ENCODE measurements at regions of chr9 and their contacts with region 1.

Region 1: DNA sequence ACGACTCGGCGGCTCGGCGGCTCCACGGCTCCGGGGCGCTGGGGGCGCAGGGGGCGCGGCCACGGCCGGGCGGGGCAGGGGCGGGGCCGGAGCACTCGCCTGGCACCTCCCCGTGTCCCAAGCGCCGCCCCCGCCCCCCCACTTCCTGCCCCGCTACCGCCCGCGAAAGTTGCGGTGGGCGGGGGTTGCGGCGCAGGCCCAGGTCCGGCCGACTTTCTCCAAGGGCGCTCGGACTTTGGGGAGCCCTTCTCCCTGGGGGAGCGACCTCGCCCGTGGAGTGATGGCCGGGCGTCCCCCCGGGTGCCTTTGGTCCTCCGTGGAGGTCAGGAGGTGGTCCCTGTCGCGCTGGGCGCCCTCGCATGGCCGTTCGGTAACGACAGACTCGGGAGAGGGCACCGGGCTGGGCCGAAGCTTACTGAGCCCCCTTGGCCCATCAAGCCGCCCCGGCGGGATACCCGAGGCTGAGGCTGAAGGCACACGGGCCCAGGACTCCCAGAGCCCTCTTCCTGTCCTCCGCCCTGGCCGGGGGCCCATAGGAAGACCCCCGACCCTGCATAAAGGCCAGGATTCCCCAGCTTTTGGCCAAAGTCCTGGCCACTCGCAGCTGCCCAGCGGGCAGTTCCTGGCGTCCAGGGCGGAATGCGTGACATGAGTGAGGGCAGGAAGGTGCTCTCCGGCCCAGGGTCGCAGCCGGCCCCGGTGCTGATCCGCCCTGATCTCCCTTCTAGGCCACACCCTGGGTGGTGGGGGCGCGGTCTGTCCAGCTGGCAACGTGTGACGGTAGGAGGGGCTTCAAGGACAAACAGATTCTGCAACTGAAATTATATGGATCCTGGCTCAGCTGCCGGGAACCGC is 883 bp upstream of the VAV2 start:
- DNase-seq: peak; percentile 80
- ATAC-seq: peak; percentile 76
- H3K4me3 Mint-ChIP-seq: peak overlapping the region; percentile 76
- H3K27ac Mint-ChIP-seq: peak overlapping the region; percentile 65
- H3K4me1 Mint-ChIP-seq: peaks cover 39% of the 10 kb centered on the region
- H3K27me3 Mint-ChIP-seq: no peaks in the 10 kb centered on the region
- CTCF ChIP-seq: no peak

Region 2: GRCh38 chr9:133589454-133590227 is 403.4 kb before region 1 on chr9:
- CTCF ChIA-PET with region 1: no interaction called
- POLR2A ChIA-PET with region 1: no interaction called
- intact Hi-C with region 1: loop called (anchors 2 kb)
- DNase-seq: no peak
- ATAC-seq: no peak
- H3K4me3 Mint-ChIP-seq: no peak overlapping the region
- H3K27ac Mint-ChIP-seq: no peak overlapping the region
- H3K4me1 Mint-ChIP-seq: peaks cover 16% of the 10 kb centered on the region
- H3K27me3 Mint-ChIP-seq: peaks cover 9% of the 10 kb centered on the region
- CTCF ChIP-seq: no peak

Region 3: GRCh38 chr9:133787754-133788025 is 205.3 kb before region 1 on chr9:
- CTCF ChIA-PET with region 1: interaction called, 220 read pairs
- POLR2A ChIA-PET with region 1: interaction called, 47 read pairs
- intact Hi-C with region 1: loop called (anchors 1 kb)
- DNase-seq: peak; percentile 39
- ATAC-seq: peak; percentile 80
- H3K4me3 Mint-ChIP-seq: no peak overlapping the region
- H3K27ac Mint-ChIP-seq: peak overlapping the region; percentile 68
- H3K4me1 Mint-ChIP-seq: peaks cover 90% of the 10 kb centered on the region
- H3K27me3 Mint-ChIP-seq: no peaks in the 10 kb centered on the region
- CTCF ChIP-seq: no peak

Region 4: GRCh38 chr9:133876144-133876543 is 116.9 kb before region 1 on chr9:
- CTCF ChIA-PET with region 1: no interaction called
- POLR2A ChIA-PET with region 1: no interaction called
- intact Hi-C with region 1: loop called (anchors 5 kb)
- DNase-seq: no peak
- ATAC-seq: no peak
- H3K4me3 Mint-ChIP-seq: no peak overlapping the region
- H3K27ac Mint-ChIP-seq: peak overlapping the region; percentile 37
- H3K4me1 Mint-ChIP-seq: peaks cover 51% of the 10 kb centered on the region
- H3K27me3 Mint-ChIP-seq: no peaks in the 10 kb centered on the region
- CTCF ChIP-seq: no peak

Region 5: DNA sequence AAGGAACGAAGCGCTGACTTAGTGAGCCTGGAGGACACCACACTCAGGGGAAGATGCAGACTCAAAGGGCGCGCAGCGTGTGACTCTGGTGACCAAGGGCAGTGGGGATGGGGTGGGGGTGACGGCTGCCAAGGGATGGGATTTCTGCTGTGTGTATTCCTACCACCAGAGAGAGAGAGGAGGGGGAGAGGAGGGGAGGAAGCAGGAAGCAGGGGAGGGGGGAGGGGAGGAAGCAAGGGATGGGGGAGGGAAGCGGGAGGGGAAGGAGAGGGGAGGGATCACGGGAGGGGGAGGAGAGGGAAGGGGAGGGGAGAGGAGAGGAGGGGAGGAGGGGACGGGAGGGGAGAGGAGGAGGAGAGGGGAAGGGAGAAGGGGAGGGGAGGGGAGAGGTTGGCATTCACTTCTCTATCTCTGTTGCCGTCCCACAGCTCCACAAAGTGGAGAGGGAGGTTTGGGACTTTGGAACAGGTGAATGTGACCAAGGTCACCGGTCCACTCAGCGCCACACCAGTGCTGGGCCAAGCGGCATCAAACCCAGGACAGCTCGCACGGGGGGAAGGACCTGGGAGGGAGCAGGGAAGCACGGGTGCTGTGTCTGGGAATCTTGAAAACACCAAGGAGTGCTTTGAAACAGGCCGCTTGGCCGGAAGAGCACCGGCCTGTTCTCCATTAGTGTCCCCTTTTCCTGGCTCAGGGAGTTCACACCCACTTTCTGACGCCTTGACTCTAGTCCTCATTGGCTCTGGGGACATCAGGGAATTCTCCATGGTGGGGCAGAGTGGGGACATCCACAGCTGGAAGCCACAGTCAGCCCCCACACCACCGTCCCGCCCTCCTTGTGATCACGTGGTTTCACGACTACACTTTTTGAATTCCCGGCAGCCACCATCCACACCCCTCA is 78.3 kb before region 1 on chr9:
- CTCF ChIA-PET with region 1: no interaction called
- POLR2A ChIA-PET with region 1: no interaction called
- intact Hi-C with region 1: no loop called
- DNase-seq: no peak
- ATAC-seq: no peak
- H3K4me3 Mint-ChIP-seq: no peak overlapping the region
- H3K27ac Mint-ChIP-seq: peak overlapping the region; percentile 30
- H3K4me1 Mint-ChIP-seq: peaks cover 72% of the 10 kb centered on the region
- H3K27me3 Mint-ChIP-seq: no peaks in the 10 kb centered on the region
- CTCF ChIP-seq: no peak

Region 6: GRCh38 chr9:133945314-133945975 is 47.6 kb before region 1 on chr9:
- CTCF ChIA-PET with region 1: interaction called, 13 read pairs
- POLR2A ChIA-PET with region 1: interaction called, 30 read pairs
- intact Hi-C with region 1: loop called (anchors 1 kb)
- DNase-seq: peak; percentile 72
- ATAC-seq: peak; percentile 71
- H3K4me3 Mint-ChIP-seq: peak overlapping the region; percentile 82
- H3K27ac Mint-ChIP-seq: peak overlapping the region; percentile 94
- H3K4me1 Mint-ChIP-seq: peaks cover 76% of the 10 kb centered on the region
- H3K27me3 Mint-ChIP-seq: no peaks in the 10 kb centered on the region
- CTCF ChIP-seq: no peak

Region 7: DNA sequence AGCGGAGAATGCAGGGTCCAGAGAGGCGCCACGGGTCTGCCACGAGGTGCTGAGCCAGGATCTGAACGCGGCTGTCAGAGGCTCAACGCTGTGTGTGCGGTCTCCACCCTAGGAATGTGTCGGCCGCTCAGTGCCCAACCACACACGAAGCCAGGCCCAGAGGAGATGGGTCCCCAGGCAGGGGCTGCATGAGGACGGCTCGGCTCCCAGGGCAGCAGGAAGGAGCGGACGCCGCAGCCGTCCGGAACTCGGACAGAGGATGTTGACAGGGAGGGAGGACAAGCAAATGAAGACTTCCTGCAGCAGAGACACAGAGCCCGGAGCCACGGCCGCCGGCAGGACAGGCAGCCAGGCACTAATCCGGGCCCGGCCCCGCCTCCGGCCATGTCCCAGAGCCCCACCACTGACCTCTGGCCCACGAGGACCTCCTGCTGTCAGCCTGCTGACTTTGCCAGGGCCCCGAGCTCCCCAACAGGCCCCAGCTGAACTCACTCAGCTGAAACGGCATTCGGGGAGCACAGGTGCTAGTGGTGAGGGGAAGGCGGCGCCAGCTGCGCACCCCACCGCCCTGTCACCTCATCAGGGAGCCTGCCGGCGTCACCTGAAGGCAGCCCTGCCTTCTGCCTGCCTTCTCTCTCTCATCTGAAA is 13.6 kb before region 1 on chr9:
- CTCF ChIA-PET with region 1: no interaction called
- POLR2A ChIA-PET with region 1: interaction called, 4 read pairs
- intact Hi-C with region 1: loop called (anchors 1 kb)
- DNase-seq: peak; percentile 44
- ATAC-seq: peak; percentile 75
- H3K4me3 Mint-ChIP-seq: peak overlapping the region; percentile 74
- H3K27ac Mint-ChIP-seq: peak overlapping the region; percentile 83
- H3K4me1 Mint-ChIP-seq: peaks cover 76% of the 10 kb centered on the region
- H3K27me3 Mint-ChIP-seq: no peaks in the 10 kb centered on the region
- CTCF ChIP-seq: no peak

Region 8: DNA sequence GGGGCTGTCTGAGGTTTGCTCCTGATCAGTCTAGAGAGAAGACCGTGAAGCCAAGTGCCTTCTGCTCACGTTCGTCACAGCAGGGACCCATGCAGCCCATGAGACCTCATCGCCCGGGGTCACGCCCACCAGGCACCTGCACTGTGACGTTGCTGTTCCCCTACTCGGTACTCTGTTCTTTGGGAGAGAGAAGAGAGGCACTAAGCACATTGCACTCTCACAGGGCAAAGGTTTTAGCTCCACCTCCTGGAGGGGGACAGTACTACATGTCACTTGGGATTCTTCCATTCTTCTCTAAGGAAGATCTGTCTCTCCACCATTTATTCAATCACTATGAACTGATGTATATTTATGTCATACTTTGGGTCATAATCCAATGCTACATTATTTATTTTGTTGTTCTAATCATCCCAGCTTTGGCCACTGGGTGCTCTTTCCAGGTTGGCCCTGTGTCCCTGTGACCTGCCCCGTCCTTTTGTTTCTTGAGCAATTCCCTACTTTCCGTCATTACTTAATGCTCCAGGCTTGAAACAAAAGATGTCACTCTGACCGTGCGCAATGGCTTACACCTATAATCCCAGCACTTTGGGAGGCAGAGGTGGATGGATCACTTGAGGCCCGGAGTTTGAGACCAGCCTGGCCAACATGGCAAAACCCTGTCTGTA is 106.2 kb after region 1 on chr9:
- CTCF ChIA-PET with region 1: interaction called, 15 read pairs
- POLR2A ChIA-PET with region 1: no interaction called
- intact Hi-C with region 1: loop called (anchors 1 kb)
- DNase-seq: peak; percentile 24
- ATAC-seq: peak; percentile 85
- H3K4me3 Mint-ChIP-seq: no peak overlapping the region
- H3K27ac Mint-ChIP-seq: no peak overlapping the region
- H3K4me1 Mint-ChIP-seq: peaks cover 4% of the 10 kb centered on the region
- H3K27me3 Mint-ChIP-seq: peaks cover 7% of the 10 kb centered on the region
- CTCF ChIP-seq: no peak

Region 9: GRCh38 chr9:134258828-134259546 is 266.0 kb after region 1 on chr9:
- CTCF ChIA-PET with region 1: no interaction called
- POLR2A ChIA-PET with region 1: no interaction called
- intact Hi-C with region 1: no loop called
- DNase-seq: no peak
- ATAC-seq: no peak
- H3K4me3 Mint-ChIP-seq: no peak overlapping the region
- H3K27ac Mint-ChIP-seq: no peak overlapping the region
- H3K4me1 Mint-ChIP-seq: peaks cover 4% of the 10 kb centered on the region
- H3K27me3 Mint-ChIP-seq: peaks cover 6% of the 10 kb centered on the region
- CTCF ChIP-seq: no peak

Region 10: DNA sequence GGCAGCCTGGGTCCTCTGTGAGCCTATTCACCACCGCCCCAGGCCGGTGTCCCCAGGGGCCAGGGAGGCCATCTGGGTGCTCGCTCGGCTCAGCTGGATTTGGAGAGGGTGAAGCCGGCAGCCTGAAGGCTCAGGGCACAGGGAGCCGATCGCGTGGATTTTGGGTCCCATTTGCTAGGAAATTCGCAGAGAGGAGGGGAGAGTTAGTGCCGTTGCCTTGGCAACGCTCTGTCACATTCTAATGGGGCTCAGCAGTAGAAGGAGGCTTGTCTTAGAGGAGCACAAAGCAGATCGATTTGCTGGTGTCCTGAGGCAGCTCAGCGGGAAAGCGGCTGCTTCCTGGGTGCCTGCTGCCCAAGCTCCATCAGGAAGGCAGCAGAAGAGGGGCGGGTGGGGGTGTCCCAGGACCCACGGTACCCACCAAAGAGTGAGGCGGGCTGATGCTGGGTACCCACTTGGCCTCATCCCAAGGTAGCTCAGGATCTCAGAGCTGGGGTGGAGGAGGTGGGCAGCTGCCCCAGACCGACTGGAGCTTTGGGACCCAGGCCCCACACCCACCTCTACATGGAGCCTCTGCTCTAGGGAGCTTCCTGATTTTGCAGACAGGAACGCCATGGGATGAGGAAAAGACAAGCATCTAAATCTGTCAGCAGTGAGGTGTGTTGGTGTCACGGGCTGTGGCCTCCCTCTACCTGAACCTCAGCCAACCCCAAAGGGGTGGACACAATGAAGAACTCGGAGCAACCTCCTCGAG is 1077.4 kb after region 1 on chr9:
- CTCF ChIA-PET with region 1: no interaction called
- POLR2A ChIA-PET with region 1: no interaction called
- intact Hi-C with region 1: no loop called
- DNase-seq: no peak
- ATAC-seq: no peak
- H3K4me3 Mint-ChIP-seq: no peak overlapping the region
- H3K27ac Mint-ChIP-seq: no peak overlapping the region
- H3K4me1 Mint-ChIP-seq: no peaks in the 10 kb centered on the region
- H3K27me3 Mint-ChIP-seq: peaks cover 38% of the 10 kb centered on the region
- CTCF ChIP-seq: no peak